Esophagus squamous epithelium (tissue), 5 donors: ENCODE measurements at regions of chr14 and their contacts with region 1.

Region 1: GRCh38 chr14:67943947-67944346 is 124.4 kb downstream of the RAD51B start:
- DNase-seq: no peak
- H3K4me3 ChIP-seq: no peak overlapping the region
- H3K27ac ChIP-seq: peak overlapping the region; percentile 41 to 86 (median 66)
- H3K4me1 ChIP-seq: peaks cover 17 to 63% (median 34%) of the 10 kb centered on the region in 3 donors
- H3K27me3 ChIP-seq: no peaks in the 10 kb centered on the region
- CTCF ChIP-seq: peak; percentile 62 to 93 (median 86)
- POLR2A ChIP-seq: no peak

Region 2: DNA sequence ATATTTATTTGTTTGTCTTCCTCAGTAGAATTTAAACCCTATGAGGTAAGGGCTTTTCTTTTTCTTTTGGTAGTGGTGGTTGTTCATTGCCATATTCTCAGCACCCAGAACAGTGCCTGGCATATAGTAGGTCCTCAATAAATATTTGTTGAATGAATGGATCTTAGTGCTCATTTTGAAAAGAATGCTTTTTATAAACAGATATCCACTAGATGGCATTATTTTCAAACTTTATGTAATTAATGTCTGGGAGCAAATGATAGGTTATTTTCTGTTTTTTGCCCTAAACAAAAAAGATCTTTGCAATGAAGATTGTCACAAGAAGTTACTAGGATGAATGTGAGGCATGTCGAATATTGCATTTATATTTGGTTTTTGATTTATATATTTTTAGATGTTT is 60.2 kb before region 1 on chr14:
- intact Hi-C with region 1: no loop called
- DNase-seq: no peak
- H3K4me3 ChIP-seq: no peak overlapping the region
- H3K27ac ChIP-seq: no peak overlapping the region
- H3K4me1 ChIP-seq: no peaks in the 10 kb centered on the region
- H3K27me3 ChIP-seq: no peaks in the 10 kb centered on the region
- CTCF ChIP-seq: peak in 2 of 6 experiments; percentile 37 to 40
- POLR2A ChIP-seq: no peak

Region 3: DNA sequence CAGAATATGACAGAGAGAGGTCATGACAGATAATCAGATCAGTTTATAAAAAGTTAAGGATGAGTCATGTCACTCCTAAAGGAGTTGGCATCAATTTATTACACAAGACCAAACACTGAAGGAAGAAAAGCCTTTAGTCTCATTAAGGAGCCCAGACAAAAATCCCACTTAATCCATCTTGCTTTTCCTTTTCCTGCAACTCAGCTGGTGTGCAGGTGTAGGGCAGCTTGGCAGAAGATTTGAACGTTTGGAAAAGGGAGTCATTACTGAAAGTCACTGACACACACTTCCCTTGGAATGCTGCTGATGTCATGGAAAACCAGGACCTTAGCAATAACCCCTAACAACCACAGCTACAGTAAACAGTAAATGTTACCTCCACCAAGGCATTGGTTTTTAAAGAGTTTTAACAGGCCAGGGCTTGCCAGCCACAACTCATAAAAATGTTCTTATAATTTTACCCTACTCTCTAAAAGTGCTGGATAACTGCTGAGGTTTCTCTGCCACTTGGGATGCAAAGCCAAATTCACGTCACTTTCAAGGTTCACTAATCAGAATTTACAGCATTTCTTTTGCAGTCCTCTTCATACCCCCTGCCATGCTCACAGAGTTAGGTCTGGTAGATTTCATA is 196.3 kb after region 1 on chr14:
- intact Hi-C with region 1: loop called (anchors 10 kb)
- DNase-seq: no peak
- H3K4me3 ChIP-seq: no peak overlapping the region
- H3K27ac ChIP-seq: peak overlapping the region; percentile 65 to 83 (median 80)
- H3K4me1 ChIP-seq: peaks cover 19 to 100% (median 57%) of the 10 kb centered on the region in 3 donors
- H3K27me3 ChIP-seq: no peaks in the 10 kb centered on the region
- CTCF ChIP-seq: no peak
- POLR2A ChIP-seq: no peak

Region 4: DNA sequence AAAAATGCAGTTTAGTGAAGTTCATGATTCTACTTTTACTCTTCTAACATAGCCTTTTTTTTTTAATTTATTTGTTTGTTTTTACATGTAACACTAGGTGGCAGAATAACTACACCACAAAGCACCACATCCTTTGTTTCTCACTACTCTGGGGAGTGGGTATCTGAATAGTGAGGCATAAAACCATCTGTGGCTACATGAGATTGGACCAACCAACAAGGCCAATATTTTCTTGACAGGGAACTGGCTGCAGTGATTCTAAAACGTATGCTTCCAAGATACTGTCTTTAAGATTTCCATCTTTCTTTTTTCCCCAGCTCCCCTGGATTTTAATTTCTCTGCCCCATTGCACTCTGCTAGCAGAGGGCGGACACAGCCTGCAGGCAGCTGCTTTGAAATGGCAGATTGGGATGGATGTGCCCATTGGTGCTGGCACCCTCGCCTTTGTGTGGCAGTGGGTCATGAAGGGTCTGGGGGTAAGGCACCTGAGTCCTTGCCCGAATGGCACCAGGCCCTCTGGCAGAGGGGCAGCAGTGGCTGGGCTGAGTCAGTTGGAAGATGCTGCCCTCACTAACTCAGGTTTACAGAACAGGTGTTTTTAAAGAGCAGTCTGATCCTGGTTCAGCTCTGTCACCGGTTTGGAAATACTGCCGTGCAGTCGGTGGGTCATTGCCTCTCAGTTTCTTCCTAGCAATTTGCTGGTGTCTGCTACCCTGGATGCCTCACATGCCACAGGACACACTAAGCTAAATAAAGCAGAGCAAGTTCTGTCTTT is 304.7 kb after region 1 on chr14:
- intact Hi-C with region 1: loop called (anchors 10 kb)
- DNase-seq: no peak
- H3K4me3 ChIP-seq: no peak overlapping the region
- H3K27ac ChIP-seq: peak overlapping the region; percentile 71 to 92 (median 87)
- H3K4me1 ChIP-seq: peaks cover 53 to 85% (median 74%) of the 10 kb centered on the region in 3 donors
- H3K27me3 ChIP-seq: no peaks in the 10 kb centered on the region
- CTCF ChIP-seq: peak; percentile 28 to 73 (median 66)
- POLR2A ChIP-seq: no peak